ENCODE measurements at regions of chr18 and their contacts with region 1.

Region 1: DNA sequence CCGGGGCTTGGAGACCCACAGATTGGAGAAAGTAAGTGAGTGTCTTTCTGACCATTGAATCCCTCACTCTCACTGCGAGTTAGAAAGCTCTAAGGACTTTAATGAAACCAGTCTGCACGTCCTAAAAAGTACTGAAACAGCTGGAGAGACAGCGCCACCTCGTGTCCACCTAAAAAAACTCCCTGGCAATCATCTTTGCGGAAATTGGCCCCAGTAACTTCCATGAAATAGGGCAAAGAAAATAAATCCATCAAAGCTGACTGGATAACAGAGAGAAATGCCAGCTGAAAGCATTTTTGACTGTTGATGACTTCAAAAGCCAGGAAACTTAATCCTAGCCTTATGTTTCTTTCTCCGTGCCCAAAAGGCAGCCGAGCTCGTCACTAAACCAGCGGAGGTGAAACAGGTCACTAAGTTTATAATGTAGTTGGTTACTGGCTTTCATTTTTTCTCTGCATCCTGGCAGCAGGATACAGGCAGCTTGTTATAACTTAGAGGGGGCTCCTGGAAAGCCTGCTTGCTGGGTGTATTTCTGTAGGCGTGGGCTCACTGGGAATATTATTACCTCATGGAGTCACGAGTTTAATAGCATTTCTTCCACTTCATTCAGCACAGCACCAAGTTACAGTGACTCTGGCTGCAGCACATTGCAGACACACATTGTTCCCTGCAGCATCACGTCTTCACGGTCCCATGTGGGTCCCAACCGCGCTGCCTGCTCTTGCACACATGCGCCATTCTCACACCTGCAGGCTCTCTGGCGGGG is 266.5 kb downstream of the HRH4 start:
- DNase-seq: peak; percentile 36 to 37
- H3K4me3 ChIP-seq: no peak overlapping the region
- H3K27ac ChIP-seq: no peak overlapping the region
- H3K4me1 ChIP-seq: no peaks in the 10 kb centered on the region
- H3K27me3 ChIP-seq: peaks cover 3% of the 10 kb centered on the region; the same call in 1 of the 2 replicates
- CTCF ChIP-seq: peak; percentile 74

Region 2: GRCh38 chr18:24354286-24354685 is 372.6 kb before region 1 on chr18:
- CTCF ChIA-PET with region 1: no interaction called
- POLR2A ChIA-PET with region 1: no interaction called
- intact Hi-C with region 1: loop called (anchors 10 kb)
- DNase-seq: no peak
- H3K4me3 ChIP-seq: no peak overlapping the region
- H3K27ac ChIP-seq: no peak overlapping the region
- H3K4me1 ChIP-seq: no peaks in the 10 kb centered on the region
- H3K27me3 ChIP-seq: no peaks in the 10 kb centered on the region
- CTCF ChIP-seq: no peak

Region 3: DNA sequence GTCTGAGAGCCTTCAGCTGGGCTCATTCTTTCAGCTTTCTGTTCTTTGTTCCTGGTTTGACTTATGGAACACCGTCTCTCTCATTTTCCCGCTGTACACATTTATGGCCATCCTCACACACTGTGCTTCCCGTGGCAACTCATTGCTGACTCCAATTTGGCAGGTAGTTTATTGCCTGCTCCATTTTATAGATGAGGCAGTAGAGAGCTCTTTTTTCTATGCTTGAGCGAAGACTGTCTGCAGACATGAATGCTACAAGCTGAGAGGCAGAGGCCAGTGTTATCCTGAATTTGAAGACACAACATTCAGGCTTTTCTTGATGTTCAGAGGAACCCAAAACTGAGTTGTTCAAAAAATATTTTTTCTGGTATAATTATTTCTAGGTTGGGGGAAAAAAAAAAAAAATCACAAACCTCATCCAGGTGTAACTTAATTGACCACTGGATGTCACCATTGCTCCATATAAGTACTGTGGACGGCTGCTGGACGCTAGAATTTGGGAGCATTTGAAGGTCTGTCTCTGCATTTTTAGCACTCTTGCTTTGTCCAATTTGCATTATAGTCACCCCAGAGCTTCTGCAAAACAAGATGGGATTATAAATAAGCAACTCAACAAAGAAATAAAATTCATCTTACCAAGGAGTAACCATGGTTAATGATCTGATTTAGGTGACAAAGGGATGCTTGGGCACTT is 183.0 kb before region 1 on chr18:
- CTCF ChIA-PET with region 1: no interaction called
- POLR2A ChIA-PET with region 1: no interaction called
- intact Hi-C with region 1: loop called (anchors 5 kb)
- DNase-seq: no peak
- H3K4me3 ChIP-seq: no peak overlapping the region
- H3K27ac ChIP-seq: no peak overlapping the region
- H3K4me1 ChIP-seq: no peaks in the 10 kb centered on the region
- H3K27me3 ChIP-seq: peaks cover 1% of the 10 kb centered on the region
- CTCF ChIP-seq: peak; percentile 64

Region 4: GRCh38 chr18:24600076-24600654 is 126.7 kb before region 1 on chr18:
- CTCF ChIA-PET with region 1: no interaction called
- POLR2A ChIA-PET with region 1: no interaction called
- intact Hi-C with region 1: loop called (anchors 10 kb)
- DNase-seq: no peak
- H3K4me3 ChIP-seq: no peak overlapping the region
- H3K27ac ChIP-seq: no peak overlapping the region
- H3K4me1 ChIP-seq: no peaks in the 10 kb centered on the region
- H3K27me3 ChIP-seq: peaks cover 16% of the 10 kb centered on the region
- CTCF ChIP-seq: peak; percentile 61

Region 5: DNA sequence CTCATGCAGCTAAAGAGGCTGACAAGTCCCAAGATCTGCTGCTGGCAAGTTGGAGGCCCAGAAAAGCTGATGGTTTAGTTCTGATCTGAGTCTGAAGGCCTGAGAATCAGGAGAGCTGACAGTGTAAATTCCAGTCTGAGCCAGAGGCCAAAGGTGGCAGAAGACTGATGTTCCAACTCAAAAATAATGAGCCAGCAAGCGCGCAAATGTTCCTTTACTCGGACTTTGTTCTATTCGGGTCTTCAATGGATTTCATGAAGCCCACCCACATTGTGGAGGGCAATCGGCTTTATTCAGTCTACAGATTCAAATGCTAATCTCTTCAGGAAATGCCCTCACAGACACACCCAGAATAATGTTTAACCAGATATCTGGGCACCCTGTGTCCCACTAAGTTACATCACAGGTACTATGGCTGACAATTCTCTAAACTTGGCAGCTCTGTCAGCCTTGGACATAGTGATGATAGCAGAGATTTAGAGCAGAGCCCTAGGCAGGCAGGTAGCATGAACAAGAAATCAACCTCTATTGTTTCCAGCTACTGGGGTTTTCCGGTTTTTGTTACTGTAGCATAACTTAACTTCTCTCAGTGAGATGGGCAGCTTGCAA is 52.0 kb after region 1 on chr18:
- CTCF ChIA-PET with region 1: no interaction called
- POLR2A ChIA-PET with region 1: no interaction called
- intact Hi-C with region 1: no loop called
- DNase-seq: no peak
- H3K4me3 ChIP-seq: no peak overlapping the region
- H3K27ac ChIP-seq: no peak overlapping the region
- H3K4me1 ChIP-seq: no peaks in the 10 kb centered on the region
- H3K27me3 ChIP-seq: peaks cover 6% of the 10 kb centered on the region; the same call in 1 of the 2 replicates
- CTCF ChIP-seq: no peak